Vagina (tissue), 2 donors: ENCODE measurements at regions of chr2 and their contacts with region 1.

Region 1: DNA sequence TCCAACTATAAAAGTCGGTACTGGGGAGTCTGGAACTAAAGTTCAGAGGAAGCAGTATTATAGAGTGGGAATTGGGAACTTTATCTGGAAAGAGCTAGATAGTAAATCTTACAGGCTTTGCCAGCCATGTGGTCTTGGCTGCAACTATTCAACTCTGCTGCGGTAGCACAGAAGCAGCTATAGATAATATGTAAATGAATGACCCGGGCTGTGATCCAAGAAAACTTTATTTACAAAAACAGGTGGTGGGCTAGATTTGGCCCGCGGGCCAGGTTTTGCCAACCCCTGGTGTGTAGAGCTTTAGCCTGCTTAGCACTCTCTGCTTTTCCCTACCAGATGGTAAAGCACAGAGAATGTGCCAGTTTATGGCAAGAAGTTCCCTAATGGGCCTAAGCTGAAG is 70.8 kb downstream of the TNP1 start:
- DNase-seq: no peak
- H3K4me3 ChIP-seq: no peak overlapping the region
- H3K27ac ChIP-seq: peak overlapping the region; percentile 83
- H3K4me1 ChIP-seq: peaks cover 41% of the 10 kb centered on the region
- H3K27me3 ChIP-seq: no peaks in the 10 kb centered on the region
- CTCF ChIP-seq: no peak
- POLR2A ChIP-seq: no peak

Region 2: DNA sequence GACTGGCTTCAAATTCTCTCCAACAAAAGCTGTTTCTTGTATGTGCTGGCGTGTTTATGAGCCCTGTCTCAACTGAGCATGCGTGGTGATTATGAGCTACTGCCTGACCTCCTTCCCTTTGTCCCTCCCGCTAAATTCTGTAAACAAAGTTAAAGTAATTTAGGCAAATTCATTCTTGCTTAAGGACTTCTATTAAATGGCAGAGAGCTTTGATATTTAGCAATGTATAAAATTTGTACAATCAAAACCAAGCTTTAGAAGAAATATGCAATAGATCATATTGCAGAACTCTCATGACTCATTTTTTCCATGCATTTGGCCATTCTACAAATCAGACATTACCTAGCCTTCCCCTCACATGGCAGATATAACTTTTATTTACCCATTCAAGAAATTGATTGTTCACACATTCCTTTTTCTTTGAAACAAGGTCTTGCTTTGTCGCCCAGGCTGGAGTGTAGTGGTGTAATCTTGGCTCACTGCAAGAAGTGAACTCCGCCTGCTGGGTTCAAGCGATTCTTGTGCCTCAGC is 137.7 kb before region 1 on chr2:
- intact Hi-C with region 1: no loop called
- DNase-seq: no peak
- H3K4me3 ChIP-seq: no peak overlapping the region
- H3K27ac ChIP-seq: no peak overlapping the region
- H3K4me1 ChIP-seq: peaks cover 8% of the 10 kb centered on the region
- H3K27me3 ChIP-seq: no peaks in the 10 kb centered on the region
- CTCF ChIP-seq: no peak
- POLR2A ChIP-seq: no peak

Region 3: GRCh38 chr2:216974321-216975302 is 185.5 kb after region 1 on chr2:
- intact Hi-C with region 1: loop called (anchors 2 kb)
- DNase-seq: no peak
- H3K4me3 ChIP-seq: no peak overlapping the region
- H3K27ac ChIP-seq: peak overlapping the region; percentile 74
- H3K4me1 ChIP-seq: peaks cover 23% of the 10 kb centered on the region
- H3K27me3 ChIP-seq: no peaks in the 10 kb centered on the region
- CTCF ChIP-seq: no peak
- POLR2A ChIP-seq: no peak

Region 4: DNA sequence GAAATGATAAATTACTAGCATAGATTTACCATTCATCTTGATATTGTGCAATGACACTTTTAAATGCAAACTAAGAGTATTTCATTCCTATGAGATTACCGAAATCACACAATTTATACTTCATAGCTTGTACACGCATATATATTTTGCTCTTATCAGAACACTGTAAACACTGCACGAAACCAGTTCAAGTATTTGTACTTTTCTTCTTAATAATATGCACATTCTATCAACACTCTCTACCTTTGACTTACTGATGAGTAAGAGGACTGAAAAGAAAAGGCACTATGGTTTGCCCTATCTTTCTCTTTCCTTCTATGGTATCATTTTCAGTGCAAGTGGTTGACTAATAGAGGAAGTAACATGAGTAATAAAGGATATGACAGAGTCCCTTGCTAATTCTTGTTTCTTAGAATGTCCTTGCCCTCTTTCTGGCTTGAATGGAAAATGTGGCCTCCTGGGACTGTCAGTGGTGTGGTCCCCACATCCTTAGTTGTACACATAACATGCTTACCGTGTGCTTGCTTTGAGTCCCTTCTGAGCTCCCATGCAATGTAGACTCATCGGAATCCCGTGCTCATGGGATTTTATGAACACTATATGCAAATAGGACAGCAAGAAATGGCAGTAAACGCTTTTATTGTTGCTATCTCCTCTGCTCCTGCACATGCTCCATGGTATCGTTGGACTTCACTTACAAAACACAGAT is 434.3 kb after region 1 on chr2:
- intact Hi-C with region 1: loop called (anchors 10 kb)
- DNase-seq: no peak
- H3K4me3 ChIP-seq: no peak overlapping the region
- H3K27ac ChIP-seq: no peak overlapping the region
- H3K4me1 ChIP-seq: peaks cover 11% of the 10 kb centered on the region
- H3K27me3 ChIP-seq: no peaks in the 10 kb centered on the region
- CTCF ChIP-seq: no peak
- POLR2A ChIP-seq: no peak